ENCODE measurements at regions of chr10 and their contacts with region 1.

Region 1: GRCh38 chr10:88553116-88553752 is 29.9 kb downstream of the RNLS start:
- DNase-seq: peak; percentile 40 to 42
- H3K4me3 ChIP-seq: no peak overlapping the region
- H3K4me3 Mint-ChIP-seq: no peak overlapping the region
- H3K27ac Mint-ChIP-seq: no peak overlapping the region
- H3K4me1 ChIP-seq: no peaks in the 10 kb centered on the region
- H3K4me1 Mint-ChIP-seq: no peaks in the 10 kb centered on the region
- H3K27me3 ChIP-seq: no peaks in the 10 kb centered on the region
- H3K27me3 Mint-ChIP-seq: peaks cover 8% of the 10 kb centered on the region
- CTCF ChIP-seq: peak; percentile 64 to 88

Region 2: DNA sequence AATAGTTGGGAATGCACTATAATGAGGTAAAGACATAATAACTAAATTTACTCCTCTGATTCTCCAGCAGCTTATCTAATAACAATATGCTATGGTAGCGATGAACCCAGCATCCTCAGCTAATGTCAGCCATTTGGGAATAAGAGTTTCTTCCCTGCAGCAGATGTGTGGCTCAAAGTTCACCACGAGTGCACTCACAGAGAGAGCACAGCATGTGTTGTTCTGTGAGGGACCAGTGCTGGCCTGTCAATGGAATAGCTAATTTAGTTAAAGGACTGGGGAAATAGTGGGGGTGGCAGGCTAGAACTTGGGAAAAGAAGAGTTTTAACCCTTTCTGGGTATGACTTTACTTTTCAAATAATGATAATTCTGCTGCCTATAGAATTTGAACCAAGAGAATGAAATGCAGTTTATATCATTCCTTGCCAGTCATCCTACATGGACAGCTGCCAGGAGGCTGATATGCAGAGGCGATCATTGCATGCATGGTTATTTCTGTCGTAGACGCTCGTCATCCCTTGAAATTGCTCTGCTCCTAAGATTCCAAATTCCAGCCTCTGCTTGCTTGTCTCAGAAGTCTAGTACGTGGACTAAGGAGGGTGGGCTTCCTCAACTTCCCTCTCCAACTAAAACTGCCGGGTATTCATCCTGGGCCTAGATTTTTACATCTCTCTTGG is 325.8 kb before region 1 on chr10:
- CTCF ChIA-PET with region 1: no interaction called
- POLR2A ChIA-PET with region 1: no interaction called
- intact Hi-C with region 1: loop called (anchors 10 kb)
- DNase-seq: no peak
- H3K4me3 ChIP-seq: no peak overlapping the region
- H3K4me3 Mint-ChIP-seq: no peak overlapping the region
- H3K27ac Mint-ChIP-seq: no peak overlapping the region
- H3K4me1 ChIP-seq: peaks cover 21% of the 10 kb centered on the region
- H3K4me1 Mint-ChIP-seq: peaks cover 11% of the 10 kb centered on the region
- H3K27me3 ChIP-seq: no peaks in the 10 kb centered on the region
- H3K27me3 Mint-ChIP-seq: no peaks in the 10 kb centered on the region
- CTCF ChIP-seq: no peak

Region 3: GRCh38 chr10:88291289-88292184 is 261.7 kb before region 1 on chr10:
- CTCF ChIA-PET with region 1: no interaction called
- POLR2A ChIA-PET with region 1: no interaction called
- intact Hi-C with region 1: loop called (anchors 1 kb)
- DNase-seq: no peak
- H3K4me3 ChIP-seq: no peak overlapping the region
- H3K4me3 Mint-ChIP-seq: no peak overlapping the region
- H3K27ac Mint-ChIP-seq: no peak overlapping the region
- H3K4me1 ChIP-seq: no peaks in the 10 kb centered on the region; the same call in 1 of the 2 replicates
- H3K4me1 Mint-ChIP-seq: no peaks in the 10 kb centered on the region
- H3K27me3 ChIP-seq: no peaks in the 10 kb centered on the region
- H3K27me3 Mint-ChIP-seq: peaks cover 3% of the 10 kb centered on the region
- CTCF ChIP-seq: peak in 1 of 2 experiments; percentile 6

Region 4: GRCh38 chr10:88386821-88387773 is 166.1 kb before region 1 on chr10:
- CTCF ChIA-PET with region 1: no interaction called
- POLR2A ChIA-PET with region 1: no interaction called
- intact Hi-C with region 1: loop called (anchors 5 kb)
- DNase-seq: peak in 1 of 2 experiments; percentile 5
- H3K4me3 ChIP-seq: no peak overlapping the region
- H3K4me3 Mint-ChIP-seq: peak overlapping the region; percentile 64
- H3K27ac Mint-ChIP-seq: peak overlapping the region; percentile 44
- H3K4me1 ChIP-seq: peaks cover 23% of the 10 kb centered on the region
- H3K4me1 Mint-ChIP-seq: no peaks in the 10 kb centered on the region
- H3K27me3 ChIP-seq: no peaks in the 10 kb centered on the region
- H3K27me3 Mint-ChIP-seq: no peaks in the 10 kb centered on the region
- CTCF ChIP-seq: no peak

Region 5: GRCh38 chr10:88401671-88402347 is 151.4 kb before region 1 on chr10:
- CTCF ChIA-PET with region 1: no interaction called
- POLR2A ChIA-PET with region 1: no interaction called
- intact Hi-C with region 1: loop called (anchors 1 kb)
- DNase-seq: no peak
- H3K4me3 ChIP-seq: no peak overlapping the region
- H3K4me3 Mint-ChIP-seq: no peak overlapping the region
- H3K27ac Mint-ChIP-seq: no peak overlapping the region
- H3K4me1 ChIP-seq: no peaks in the 10 kb centered on the region
- H3K4me1 Mint-ChIP-seq: peaks cover 5% of the 10 kb centered on the region
- H3K27me3 ChIP-seq: no peaks in the 10 kb centered on the region
- H3K27me3 Mint-ChIP-seq: no peaks in the 10 kb centered on the region
- CTCF ChIP-seq: peak; percentile 14 to 37

Region 6: DNA sequence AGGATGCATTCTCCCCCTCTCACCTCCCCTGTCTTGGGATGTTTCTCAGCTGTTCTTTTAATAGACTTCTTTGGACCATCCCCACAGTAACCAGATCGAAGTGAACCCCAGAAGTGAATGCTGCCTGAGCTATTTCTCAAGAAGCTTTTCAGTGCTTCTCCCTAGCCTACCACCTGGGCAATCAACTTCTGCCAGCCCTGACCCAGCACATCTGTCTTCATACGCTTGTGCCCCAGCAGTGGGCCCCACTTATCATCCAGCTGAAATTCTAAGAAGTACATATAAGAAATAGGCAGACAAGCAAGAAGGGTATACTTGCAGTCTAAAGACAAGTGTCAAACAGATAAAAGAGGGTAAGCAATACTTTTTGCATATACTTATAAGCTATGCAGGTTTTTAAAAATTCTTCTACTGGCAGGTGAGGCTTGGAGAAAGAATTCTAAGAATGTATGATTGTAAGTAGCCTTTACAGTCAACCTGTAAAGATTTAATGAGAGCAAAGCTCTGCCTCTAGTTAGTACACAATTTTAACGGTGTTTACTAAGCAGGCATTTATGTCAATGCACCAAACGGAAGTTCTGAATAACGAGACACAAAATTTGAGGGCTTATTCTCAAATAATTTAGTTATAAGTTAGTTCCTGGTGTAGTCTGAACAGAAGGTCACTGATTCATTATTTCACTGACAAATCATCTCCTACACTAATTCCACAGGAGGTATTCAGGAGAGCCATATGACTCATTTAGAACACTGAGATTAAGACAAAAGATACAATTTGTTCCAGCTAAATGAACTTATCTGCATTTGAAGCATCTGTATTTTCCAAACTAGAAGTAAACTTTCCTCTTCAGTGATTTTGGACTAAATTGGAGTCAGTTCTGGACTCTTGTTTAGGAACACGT is 53.4 kb before region 1 on chr10:
- CTCF ChIA-PET with region 1: no interaction called
- POLR2A ChIA-PET with region 1: no interaction called
- intact Hi-C with region 1: no loop called
- DNase-seq: no peak
- H3K4me3 ChIP-seq: no peak overlapping the region
- H3K4me3 Mint-ChIP-seq: no peak overlapping the region
- H3K27ac Mint-ChIP-seq: no peak overlapping the region
- H3K4me1 ChIP-seq: no peaks in the 10 kb centered on the region
- H3K4me1 Mint-ChIP-seq: no peaks in the 10 kb centered on the region
- H3K27me3 ChIP-seq: no peaks in the 10 kb centered on the region
- H3K27me3 Mint-ChIP-seq: peaks cover 18% of the 10 kb centered on the region
- CTCF ChIP-seq: no peak

Region 7: DNA sequence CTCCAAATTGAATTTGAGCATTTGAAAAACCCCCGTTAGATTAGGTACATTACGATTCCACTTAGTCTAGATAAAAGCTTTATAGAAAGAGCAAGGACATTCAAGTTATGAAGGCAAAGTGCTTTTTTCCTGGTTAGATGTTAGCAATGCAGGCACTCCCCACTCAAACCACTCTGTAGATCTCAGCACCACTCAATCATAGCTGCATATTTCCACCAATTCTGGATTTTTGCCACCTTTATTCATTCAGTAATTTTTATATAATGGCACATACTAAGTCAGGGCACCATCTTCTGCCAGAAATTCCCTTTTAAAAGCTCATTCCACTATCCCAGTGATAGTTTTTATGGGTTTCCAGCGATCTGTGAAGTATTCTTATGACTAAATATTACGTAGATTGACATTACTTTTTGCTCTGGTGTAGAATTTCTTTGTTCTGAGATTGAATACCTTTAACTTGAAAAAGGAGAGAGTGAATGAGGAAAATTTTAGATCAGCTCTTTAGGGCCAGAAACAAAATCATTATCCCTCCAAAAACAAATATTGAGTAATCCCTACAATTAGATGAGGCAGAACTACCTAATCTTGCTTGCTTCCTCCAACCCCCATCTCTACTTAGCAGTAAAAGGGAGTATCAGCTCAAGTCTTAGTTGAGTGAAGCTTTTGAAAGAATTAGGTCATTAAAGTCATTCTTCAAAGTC is 21.7 kb before region 1 on chr10:
- CTCF ChIA-PET with region 1: no interaction called
- POLR2A ChIA-PET with region 1: no interaction called
- intact Hi-C with region 1: loop called (anchors 1 kb)
- DNase-seq: no peak
- H3K4me3 ChIP-seq: no peak overlapping the region
- H3K4me3 Mint-ChIP-seq: no peak overlapping the region
- H3K27ac Mint-ChIP-seq: no peak overlapping the region
- H3K4me1 ChIP-seq: no peaks in the 10 kb centered on the region
- H3K4me1 Mint-ChIP-seq: peaks cover 9% of the 10 kb centered on the region
- H3K27me3 ChIP-seq: no peaks in the 10 kb centered on the region
- H3K27me3 Mint-ChIP-seq: no peaks in the 10 kb centered on the region
- CTCF ChIP-seq: no peak

Measured in Caco-2 (cell line).